Activated CD4-positive, alpha-beta memory T cell treated with anti-CD3 and anti-CD28 coated beads for 36 hours (primary cell): ENCODE measurements at regions of chr11 and their contacts with region 1.

Region 1: GRCh38 chr11:102287964-102288724 is 29.1 kb upstream of the BIRC3 start:
- DNase-seq: peak; percentile 33
- H3K4me3 Mint-ChIP-seq: peak overlapping the region; percentile 38
- H3K27ac Mint-ChIP-seq: no peak overlapping the region
- H3K4me1 Mint-ChIP-seq: peaks cover 25% of the 10 kb centered on the region
- H3K27me3 Mint-ChIP-seq: no peaks in the 10 kb centered on the region

Region 2: GRCh38 chr11:102244681-102245409 is 43.3 kb before region 1 on chr11:
- CTCF ChIA-PET with region 1: no interaction called
- POLR2A ChIA-PET with region 1: no interaction called
- intact Hi-C with region 1: no loop called
- DNase-seq: no peak
- H3K4me3 Mint-ChIP-seq: no peak overlapping the region
- H3K27ac Mint-ChIP-seq: no peak overlapping the region
- H3K4me1 Mint-ChIP-seq: no peaks in the 10 kb centered on the region
- H3K27me3 Mint-ChIP-seq: peaks cover 4% of the 10 kb centered on the region

Region 3: DNA sequence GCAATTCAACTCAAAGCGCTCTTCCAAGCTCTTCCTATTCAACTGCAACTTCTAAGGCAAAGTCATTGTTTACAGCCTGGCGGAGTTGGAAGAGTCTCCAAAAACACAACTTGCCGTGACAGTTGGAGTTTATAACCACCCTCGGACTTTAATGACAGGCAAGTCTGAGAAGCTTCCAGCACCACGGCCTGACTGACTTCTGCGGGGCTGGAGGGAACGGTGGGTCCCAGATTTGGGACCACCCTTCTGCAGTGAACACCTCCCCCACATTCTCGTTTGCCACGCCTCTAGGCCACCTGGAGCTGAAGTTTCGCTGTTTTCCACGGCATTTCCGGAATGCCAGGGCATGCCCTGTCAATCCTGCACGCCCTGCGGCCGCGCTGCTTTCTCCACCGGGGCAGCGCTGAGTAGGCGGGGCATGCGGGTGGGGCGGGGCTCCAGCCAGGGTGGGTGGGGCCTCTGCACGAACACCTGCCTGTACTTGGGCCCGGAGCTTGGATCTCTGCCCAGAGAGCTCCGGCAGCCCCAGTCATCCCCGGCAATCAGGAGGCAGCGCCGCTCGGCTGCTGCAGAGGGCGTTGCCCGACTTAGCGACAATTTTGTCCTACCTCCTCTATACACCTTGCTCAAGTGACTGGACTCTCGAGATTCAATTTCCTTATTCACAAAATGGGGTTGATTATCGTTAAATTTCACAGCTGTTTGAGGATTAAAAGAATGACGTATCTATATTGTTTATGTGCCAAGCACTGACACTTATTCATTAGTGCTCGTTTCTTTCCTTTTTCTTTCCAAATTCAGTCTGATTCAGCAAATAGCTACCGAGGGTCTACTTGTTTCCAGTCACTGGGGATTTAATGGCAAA is 19.6 kb before region 1 on chr11:
- CTCF ChIA-PET with region 1: interaction called, 19 read pairs
- POLR2A ChIA-PET with region 1: no interaction called
- intact Hi-C with region 1: loop called (anchors 1 kb)
- DNase-seq: peak; percentile 92
- H3K4me3 Mint-ChIP-seq: peak overlapping the region; percentile 24
- H3K27ac Mint-ChIP-seq: no peak overlapping the region
- H3K4me1 Mint-ChIP-seq: peaks cover 31% of the 10 kb centered on the region
- H3K27me3 Mint-ChIP-seq: no peaks in the 10 kb centered on the region

Region 4: DNA sequence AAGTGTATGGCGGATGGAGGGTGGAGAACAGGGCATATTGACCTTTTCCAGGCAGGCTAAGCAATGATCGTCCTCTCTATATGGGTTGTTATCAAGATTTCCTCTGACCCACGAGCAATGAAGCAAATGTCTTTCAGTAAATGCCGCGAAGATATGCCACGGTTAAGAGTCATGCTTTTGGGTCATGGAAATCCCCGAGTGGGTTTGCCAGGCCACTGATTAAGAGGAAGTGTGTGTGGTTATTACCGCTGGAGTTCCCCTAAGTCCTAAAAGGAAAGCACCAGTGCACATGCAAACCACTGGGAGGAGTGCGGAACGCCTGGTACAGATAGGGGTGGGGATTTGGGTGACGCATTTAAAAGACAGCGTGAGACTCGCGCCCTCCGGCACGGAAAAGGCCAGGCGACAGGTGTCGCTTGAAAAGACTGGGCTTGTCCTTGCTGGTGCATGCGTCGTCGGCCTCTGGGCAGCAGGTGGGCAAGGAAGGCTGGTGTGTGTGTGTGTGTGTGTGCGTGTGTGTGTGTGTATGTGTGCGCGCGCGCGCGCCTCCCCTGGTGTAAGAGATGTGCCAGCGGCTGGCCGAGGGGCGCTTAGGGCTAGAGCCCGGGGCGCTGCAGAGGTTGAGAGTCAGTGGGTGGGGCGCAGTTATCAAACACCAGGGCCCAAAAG is 29.1 kb after region 1 on chr11 and contains the start of gene BIRC3:
- CTCF ChIA-PET with region 1: interaction called, 288 read pairs
- POLR2A ChIA-PET with region 1: interaction called, 14 read pairs
- intact Hi-C with region 1: loop called (anchors 1 kb)
- DNase-seq: peak; percentile 96
- H3K4me3 Mint-ChIP-seq: peak within 1 kb of the TSS; percentile 95
- H3K27ac Mint-ChIP-seq: peak within 1 kb of the TSS; percentile 100
- H3K4me1 Mint-ChIP-seq: peaks cover 56% of the 10 kb centered on the region
- H3K27me3 Mint-ChIP-seq: no peaks in the 10 kb centered on the region
- total RNA-seq, gene BIRC3: 135 to 139 TPM

Region 5: DNA sequence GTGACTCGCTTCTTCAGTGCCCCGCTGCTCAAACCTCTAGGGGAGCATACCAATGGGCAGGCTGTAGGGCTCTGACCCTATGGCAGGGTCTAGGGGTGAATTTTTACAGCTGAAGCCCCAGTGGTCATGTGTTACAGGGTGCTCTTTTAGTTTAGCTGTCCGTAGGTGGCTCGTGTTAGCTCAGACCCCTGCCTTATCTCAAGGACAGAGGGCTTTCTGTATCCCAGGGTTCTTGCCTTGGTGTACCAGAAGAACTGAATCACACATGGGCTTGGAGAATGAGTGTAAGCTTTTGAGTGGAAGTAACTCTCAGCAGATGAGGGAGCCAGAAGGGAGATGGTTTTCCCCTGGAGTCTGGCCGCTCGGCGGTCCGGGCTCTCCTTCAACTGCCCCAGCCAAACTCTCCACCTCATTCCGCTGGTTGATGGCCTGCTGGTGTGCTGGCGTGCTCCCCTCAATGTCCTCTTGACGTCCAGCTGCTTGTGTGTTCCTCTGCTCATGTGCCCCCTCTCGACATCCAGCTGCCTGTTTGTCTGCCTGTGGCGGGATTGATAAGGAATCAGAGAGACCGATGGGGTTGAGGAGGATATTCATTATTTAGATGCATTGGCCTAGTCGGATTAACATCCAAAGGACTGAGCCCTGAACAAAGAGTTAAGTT is 96.4 kb after region 1 on chr11:
- CTCF ChIA-PET with region 1: no interaction called
- POLR2A ChIA-PET with region 1: no interaction called
- intact Hi-C with region 1: loop called (anchors 5 kb)
- DNase-seq: no peak
- H3K4me3 Mint-ChIP-seq: no peak overlapping the region
- H3K27ac Mint-ChIP-seq: no peak overlapping the region
- H3K4me1 Mint-ChIP-seq: peaks cover 20% of the 10 kb centered on the region
- H3K27me3 Mint-ChIP-seq: no peaks in the 10 kb centered on the region

Region 6: GRCh38 chr11:102495161-102496042 is 207.3 kb after region 1 on chr11:
- CTCF ChIA-PET with region 1: interaction called, 22 read pairs
- POLR2A ChIA-PET with region 1: no interaction called
- intact Hi-C with region 1: loop called (anchors 1 kb)
- DNase-seq: peak; percentile 22
- H3K4me3 Mint-ChIP-seq: no peak overlapping the region
- H3K27ac Mint-ChIP-seq: no peak overlapping the region
- H3K4me1 Mint-ChIP-seq: peaks cover 18% of the 10 kb centered on the region
- H3K27me3 Mint-ChIP-seq: peaks cover 7% of the 10 kb centered on the region

Region 7: GRCh38 chr11:102546923-102547471 is 258.9 kb after region 1 on chr11:
- CTCF ChIA-PET with region 1: no interaction called
- POLR2A ChIA-PET with region 1: no interaction called
- intact Hi-C with region 1: no loop called
- DNase-seq: no peak
- H3K4me3 Mint-ChIP-seq: no peak overlapping the region
- H3K27ac Mint-ChIP-seq: no peak overlapping the region
- H3K4me1 Mint-ChIP-seq: no peaks in the 10 kb centered on the region
- H3K27me3 Mint-ChIP-seq: peaks cover 2% of the 10 kb centered on the region

Region 8: GRCh38 chr11:102666331-102666957 is 378.3 kb after region 1 on chr11:
- CTCF ChIA-PET with region 1: interaction called, 33 read pairs
- POLR2A ChIA-PET with region 1: no interaction called
- intact Hi-C with region 1: loop called (anchors 1 kb)
- DNase-seq: peak; percentile 15
- H3K4me3 Mint-ChIP-seq: no peak overlapping the region
- H3K27ac Mint-ChIP-seq: no peak overlapping the region
- H3K4me1 Mint-ChIP-seq: no peaks in the 10 kb centered on the region
- H3K27me3 Mint-ChIP-seq: no peaks in the 10 kb centered on the region